ENCODE measurements at regions of chr7 and their contacts with region 1.

Region 1: GRCh38 chr7:101815835-101816493 is 1.5 kb upstream of the CUX1 start:
- DNase-seq: peak; percentile 77 to 83 (median 80)
- ATAC-seq: peak; percentile 78
- H3K4me3 ChIP-seq: peak overlapping the region; percentile 54
- H3K4me1 ChIP-seq: peaks cover 5% of the 10 kb centered on the region
- CTCF ChIP-seq: no peak

Region 2: DNA sequence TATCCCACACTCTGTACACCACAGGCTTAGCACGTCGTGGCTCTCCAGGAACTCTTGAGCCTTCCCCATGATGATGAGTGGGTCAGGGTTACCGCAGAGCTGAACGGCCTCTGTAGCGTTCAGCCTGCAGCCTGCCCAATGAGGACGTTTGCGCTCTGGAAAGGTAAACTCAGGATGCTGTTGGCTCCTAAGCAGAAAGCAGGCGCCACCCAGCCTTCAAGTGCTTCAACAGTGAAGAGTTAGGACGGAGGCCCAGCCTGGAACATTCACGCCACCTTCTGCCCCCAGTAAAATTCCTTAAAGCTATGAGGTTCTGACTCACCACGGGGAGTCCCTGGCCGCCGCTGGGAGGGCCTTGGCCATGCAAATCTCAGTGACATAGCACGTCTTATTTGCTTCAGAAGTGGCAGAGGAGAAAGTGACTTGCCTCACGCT is 309.2 kb after region 1 on chr7:
- intact Hi-C with region 1: loop called in 1 of 2 experiments (anchors 10 kb)
- DNase-seq: peak in 1 of 3 donors; percentile 21
- ATAC-seq: peak; percentile 16
- H3K4me3 ChIP-seq: no peak overlapping the region
- H3K4me1 ChIP-seq: no peaks in the 10 kb centered on the region
- CTCF ChIP-seq: no peak

Measured in mucosa of descending colon (tissue), 3 donors.